ENCODE measurements at regions of chr17 and their contacts with region 1.

Region 1: GRCh38 chr17:5793899-5794298 is 209.6 kb upstream of the NLRP1 start:
- H3K4me3 ChIP-seq: no peak overlapping the region
- H3K27ac ChIP-seq: no peak overlapping the region
- H3K4me1 ChIP-seq: no peaks in the 10 kb centered on the region
- CTCF ChIP-seq: no peak

Region 2: DNA sequence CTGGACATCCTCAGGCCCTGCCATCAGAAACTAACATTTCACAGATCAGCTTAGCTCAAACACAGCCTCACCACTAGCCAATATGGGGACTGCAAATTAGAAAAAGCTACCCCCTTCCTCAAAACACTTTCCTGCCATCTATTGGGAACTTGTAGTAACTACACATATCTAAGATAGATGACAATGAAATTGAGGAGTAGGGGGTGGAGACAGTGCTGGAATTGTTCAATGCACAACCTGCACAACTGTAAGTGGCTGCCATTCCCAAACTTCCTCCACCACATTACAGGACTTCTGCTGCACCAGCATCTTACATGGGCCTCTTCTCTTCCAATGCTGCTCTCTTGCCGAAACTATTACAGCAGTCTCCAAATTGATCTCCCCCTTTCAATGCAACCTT is 619.2 kb after region 1 on chr17:
- CTCF ChIA-PET with region 1: interaction called, 10 read pairs
- POLR2A ChIA-PET with region 1: no interaction called
- H3K4me3 ChIP-seq: no peak overlapping the region
- H3K27ac ChIP-seq: no peak overlapping the region
- H3K4me1 ChIP-seq: no peaks in the 10 kb centered on the region
- CTCF ChIP-seq: no peak

Measured in HEK293 (cell line).